ENCODE measurements at regions of chr11 and their contacts with region 1.

Region 1: DNA sequence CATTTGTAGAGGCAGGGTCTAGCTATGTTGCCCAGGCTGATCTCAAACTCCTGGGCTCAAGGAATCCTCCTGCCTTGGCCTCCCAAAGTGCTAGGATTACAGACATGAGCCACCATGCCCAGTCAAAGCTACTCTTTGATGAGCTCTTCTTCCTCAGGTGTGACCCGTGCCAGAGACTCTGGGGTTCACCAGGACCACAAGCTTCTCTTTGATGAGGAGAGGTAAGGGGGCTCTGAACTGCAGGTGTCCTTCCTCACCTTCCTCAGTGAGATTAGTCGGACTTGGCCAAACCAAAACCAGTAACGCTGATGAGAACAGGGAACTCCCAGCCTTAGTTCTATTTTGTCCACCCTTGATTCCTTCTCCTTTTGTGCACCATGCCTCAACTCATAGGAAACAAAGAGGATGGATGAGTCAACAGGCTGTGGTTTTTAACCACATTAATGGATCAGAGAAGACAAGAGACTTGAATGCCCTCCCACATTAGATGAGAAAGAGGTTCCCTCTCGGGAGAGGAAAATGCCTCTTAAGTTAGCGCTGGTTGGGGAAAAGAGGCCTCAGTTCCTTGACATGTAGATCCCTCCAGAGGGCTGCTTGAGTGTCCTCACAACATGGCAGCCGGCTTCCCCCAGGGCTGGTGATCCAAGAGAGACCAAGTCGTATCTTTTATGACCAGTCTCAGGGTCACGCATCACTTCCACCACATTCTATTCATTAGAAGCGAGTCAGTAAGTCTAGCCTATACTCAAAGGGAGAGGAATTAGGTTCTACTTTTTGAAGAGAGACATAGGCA is 25.7 kb upstream of the CTR9 start:
- DNase-seq: no peak
- H3K4me3 ChIP-seq: no peak overlapping the region
- H3K27ac ChIP-seq: no peak overlapping the region
- H3K4me1 ChIP-seq: peaks cover 0 to 34% (median 14%) of the 10 kb centered on the region in 3 donors
- H3K27me3 ChIP-seq: no peaks in the 10 kb centered on the region
- CTCF ChIP-seq: no peak
- POLR2A ChIP-seq: no peak

Region 2: GRCh38 chr11:10400856-10401255 is 324.5 kb before region 1 on chr11:
- intact Hi-C with region 1: loop called (anchors 5 kb)
- DNase-seq: no peak
- H3K4me3 ChIP-seq: no peak overlapping the region
- H3K27ac ChIP-seq: peak overlapping the region in 1 of 4 donors; percentile 13
- H3K4me1 ChIP-seq: peaks cover 0 to 8% (median 0%) of the 10 kb centered on the region in 3 donors
- H3K27me3 ChIP-seq: no peaks in the 10 kb centered on the region
- CTCF ChIP-seq: no peak
- POLR2A ChIP-seq: no peak

Region 3: DNA sequence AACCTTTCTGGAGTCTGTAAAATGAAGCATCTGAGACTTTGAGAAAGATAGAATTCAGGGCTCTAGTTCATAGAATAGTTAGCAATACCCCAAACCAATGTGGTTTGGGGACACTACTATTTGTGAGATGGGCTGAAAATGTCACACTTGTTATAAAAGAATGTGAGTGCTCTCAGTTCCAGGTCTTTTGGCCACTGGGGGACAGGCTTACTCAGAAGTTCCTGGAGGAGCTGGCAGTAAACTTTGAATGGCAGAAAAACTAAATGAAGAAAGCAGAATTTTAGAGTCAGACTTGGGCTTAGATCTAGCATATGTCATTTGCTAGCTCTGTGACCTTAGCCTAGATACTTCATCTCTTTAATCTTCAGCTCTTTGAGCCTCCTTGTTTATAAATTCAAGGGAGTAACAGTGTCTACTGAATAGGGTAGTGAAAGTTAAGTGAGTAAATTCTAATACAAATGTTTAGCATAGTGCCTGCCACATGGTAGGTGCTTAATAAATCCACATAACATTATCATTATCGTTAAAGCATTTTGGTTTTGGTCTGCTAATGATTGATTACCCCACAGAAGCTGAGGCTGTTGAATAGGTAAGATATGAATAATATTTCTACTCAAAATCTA is 160.5 kb before region 1 on chr11:
- intact Hi-C with region 1: loop called (anchors 10 kb)
- DNase-seq: no peak
- H3K4me3 ChIP-seq: no peak overlapping the region
- H3K27ac ChIP-seq: peak overlapping the region in 2 of 4 donors; percentile 12 to 16
- H3K4me1 ChIP-seq: peaks cover 0 to 16% (median 0%) of the 10 kb centered on the region in 3 donors
- H3K27me3 ChIP-seq: no peaks in the 10 kb centered on the region
- CTCF ChIP-seq: peak in 4 of 6 experiments; percentile 29 to 41 (median 38)
- POLR2A ChIP-seq: no peak

Measured in esophagus squamous epithelium (tissue), 5 donors.